GM10248 (cell line): ENCODE measurements at regions of chr6 and their contacts with region 1.

Region 1: DNA sequence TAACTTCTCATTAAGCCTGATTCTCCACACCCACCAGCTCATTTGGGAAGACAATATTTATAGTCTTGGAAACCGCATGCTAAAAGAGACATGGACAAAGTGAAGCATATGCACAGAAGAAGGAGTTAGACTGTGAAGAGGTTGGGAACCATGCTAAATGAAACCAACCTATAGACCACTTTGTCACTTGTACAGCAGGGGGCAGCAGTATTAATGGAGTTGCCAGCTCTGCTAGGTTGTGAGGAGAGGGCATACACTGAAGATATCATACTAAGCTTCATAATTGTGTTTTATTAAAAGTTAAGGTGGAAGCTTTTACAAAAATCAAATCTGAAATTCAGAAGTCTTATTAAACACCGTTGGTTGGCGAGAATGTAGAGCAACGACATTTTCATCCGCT is 38.3 kb upstream of the HMGCLL1 start:
- DNase-seq: peak; percentile 15
- CTCF ChIP-seq: peak; percentile 46

Region 2: GRCh38 chr6:55604021-55604420 is 13.3 kb before region 1 on chr6:
- CTCF ChIA-PET with region 1: interaction called, 14 read pairs
- POLR2A ChIA-PET with region 1: no interaction called
- DNase-seq: no peak
- CTCF ChIP-seq: no peak

Region 3: GRCh38 chr6:55886185-55886836 is 269.0 kb after region 1 on chr6:
- CTCF ChIA-PET with region 1: interaction called, 26 read pairs
- POLR2A ChIA-PET with region 1: no interaction called
- DNase-seq: no peak
- CTCF ChIP-seq: peak; percentile 12